ENCODE measurements at regions of chr1 and their contacts with region 1.

Region 1: DNA sequence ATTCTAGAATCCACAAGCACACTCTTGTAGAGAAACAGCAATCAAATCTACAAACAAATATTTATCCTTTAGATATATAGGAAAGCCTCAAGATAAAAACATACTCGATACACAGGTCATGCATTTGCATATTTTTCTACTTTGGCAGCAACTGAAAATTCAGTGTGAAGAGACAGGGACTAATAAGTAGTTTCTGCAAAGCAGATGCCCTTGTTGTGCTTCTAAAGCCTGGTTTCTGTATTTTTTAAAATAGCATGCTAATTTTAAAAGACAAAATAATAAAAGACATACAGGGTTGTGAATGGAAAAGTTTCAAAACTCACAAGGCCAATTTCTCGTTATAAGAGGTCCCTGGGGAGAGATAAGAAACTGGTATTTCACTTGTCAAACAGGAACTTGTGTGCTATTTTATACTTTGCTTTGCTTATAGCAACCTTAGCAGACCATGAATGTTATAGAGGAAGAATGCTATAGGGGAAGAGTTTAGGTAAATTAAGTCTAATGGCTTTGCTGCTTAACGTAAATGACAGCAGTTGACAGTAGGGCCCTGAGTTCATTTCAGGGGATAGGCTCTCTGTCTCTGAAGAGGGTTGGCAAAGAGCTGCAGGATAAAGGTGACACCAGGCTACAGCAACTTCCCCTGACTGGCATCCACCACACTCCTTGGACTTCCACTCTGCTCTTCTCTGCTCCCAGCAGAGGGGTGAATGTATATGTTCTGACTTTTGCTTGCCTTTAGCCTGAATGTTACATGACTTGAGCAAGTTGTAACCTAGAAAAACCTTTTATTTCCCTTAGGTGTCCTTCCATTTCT is 9.4 kb upstream of the RGS13 start:
- DNase-seq: peak; percentile 94
- H3K4me3 ChIP-seq: peak overlapping the region; percentile 66
- H3K27ac ChIP-seq: peak overlapping the region; percentile 100
- H3K4me1 ChIP-seq: peaks cover 67% of the 10 kb centered on the region
- CTCF ChIP-seq: no peak

Region 2: DNA sequence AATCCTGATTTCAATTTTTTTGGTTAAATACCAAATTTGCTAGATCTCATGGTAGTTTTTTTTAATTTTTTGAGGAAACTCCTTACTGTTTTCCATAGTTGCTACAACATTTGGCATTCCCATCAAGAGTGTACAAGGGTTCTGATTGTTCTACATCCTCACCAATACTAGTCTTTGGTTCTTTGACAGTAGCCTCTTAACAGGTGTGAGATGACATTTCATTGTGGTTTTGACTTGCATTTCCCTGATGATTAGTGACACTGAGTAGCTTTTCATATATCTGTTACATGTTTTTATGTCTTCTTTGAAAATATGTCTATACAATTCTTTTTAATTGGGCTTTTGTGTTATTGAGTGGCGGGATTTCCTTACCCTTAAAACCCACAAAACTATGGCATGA is 11.5 kb before region 1 on chr1:
- CTCF ChIA-PET with region 1: interaction called, 3 read pairs
- POLR2A ChIA-PET with region 1: interaction called, 90 read pairs
- intact Hi-C with region 1: no loop called
- DNase-seq: peak; percentile 47
- H3K4me3 ChIP-seq: no peak overlapping the region
- H3K27ac ChIP-seq: no peak overlapping the region
- H3K4me1 ChIP-seq: peaks cover 47% of the 10 kb centered on the region
- CTCF ChIP-seq: no peak

Region 3: DNA sequence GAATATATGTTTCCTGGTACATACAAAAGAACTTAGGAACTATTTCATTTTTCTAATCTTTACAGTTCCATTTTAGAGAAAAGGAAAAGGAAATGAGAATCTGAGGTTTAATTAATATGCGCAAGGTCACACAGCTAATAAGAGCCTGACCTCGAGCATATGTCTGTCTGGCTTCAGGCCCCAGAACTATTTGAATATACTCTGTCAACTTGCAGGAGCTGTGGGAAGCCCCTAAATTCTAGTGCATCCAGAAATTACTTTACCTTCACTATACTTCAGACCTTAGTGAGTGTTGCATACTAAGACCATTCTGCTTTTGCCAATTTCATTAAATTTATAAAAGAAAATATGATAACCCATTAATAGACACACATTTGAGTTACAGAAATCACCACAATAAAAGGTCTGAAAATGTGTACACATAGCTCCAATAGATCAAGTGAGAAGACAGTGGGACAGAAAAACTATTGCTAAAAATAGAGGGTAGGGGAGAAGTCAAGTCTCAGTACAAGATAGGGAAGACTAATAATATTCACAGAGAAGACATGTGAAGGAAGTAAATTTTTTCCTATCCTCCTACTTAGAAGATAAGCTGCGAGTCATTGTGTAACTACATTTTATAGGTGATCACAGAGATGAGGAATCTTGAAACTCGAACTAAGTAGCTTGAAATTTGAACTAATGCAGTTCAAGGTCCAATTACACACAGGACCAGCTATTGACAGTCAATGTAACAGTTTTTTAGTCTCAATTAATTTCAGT is 13.2 kb after region 1 on chr1:
- CTCF ChIA-PET with region 1: interaction called, 3 read pairs
- POLR2A ChIA-PET with region 1: interaction called, 211 read pairs
- intact Hi-C with region 1: loop called (anchors 1 kb)
- DNase-seq: peak; percentile 42
- H3K4me3 ChIP-seq: peak overlapping the region; percentile 80
- H3K27ac ChIP-seq: peak overlapping the region; percentile 100
- H3K4me1 ChIP-seq: peaks cover 42% of the 10 kb centered on the region
- CTCF ChIP-seq: no peak